ENCODE measurements at regions of chr19 and their contacts with region 1.

Region 1: DNA sequence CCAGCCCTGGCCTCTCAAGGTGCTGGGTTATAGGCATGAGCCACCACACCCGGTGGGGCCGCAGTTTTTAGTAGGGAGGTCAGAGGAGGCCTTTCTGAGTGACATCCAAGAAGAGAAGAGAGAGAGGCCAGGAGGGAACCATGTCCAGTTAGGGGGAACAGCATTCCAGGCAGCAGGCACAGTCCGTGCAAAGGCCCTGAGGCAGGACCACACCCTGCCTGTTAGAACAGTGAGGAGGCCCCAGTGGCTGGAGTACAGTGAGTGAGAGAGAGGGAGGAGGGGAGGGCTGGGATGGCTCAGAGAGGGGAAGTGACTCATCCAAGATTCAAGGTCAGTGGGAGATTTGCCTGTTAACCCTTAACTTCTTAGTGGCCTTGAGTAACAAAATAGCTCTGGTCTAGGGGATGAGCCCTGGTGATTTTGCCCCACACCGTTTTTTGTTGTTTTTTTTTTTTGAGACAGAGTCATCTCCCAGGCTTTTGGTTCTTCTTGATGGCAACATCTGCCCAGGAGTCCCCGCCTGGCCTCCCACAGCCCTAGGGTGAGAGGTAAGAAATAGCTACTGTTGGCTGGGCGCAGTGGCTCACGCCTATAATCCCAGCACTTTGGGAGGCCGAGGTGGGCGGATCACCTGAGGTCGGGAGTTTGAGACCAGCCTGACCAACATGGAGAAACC is 2.7 kb upstream of the PLIN3 start:
- DNase-seq: peak in 2 of 42 donors; percentile 25 to 55

Region 2: DNA sequence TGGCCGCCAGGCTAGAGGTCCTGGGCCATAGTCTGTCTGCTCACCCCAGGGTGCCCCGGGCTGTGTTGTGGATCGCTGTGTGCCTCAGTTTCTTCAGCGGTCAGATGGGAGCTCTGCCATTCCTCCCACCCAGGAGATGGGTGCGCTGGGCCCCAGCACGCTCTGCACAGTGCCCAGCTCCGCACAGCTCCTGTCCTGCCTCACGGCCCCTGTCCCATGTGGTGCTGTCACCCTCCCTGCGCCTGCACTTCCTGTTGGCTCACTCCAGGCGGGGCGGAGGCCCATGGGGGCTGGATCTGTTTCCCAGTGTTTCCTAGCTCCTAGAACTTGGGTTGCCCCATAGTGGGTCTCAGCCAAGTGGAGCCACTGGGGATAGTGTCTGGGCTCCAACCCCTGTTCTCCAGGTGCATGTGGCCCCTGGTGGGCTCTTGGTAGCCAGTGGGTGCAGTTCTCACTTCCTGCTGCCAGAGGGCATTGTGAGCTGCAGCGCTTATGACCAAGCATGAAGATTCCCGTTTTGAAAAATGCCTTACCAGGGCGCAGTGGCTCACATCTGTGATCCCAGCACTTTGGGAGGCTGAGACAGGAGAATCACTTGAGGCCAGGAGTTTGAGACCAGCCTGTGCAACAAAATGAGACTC is 168.6 kb after region 1 on chr19:
- intact Hi-C with region 1: loop called (anchors 5 kb)
- DNase-seq: peak in 2 of 42 donors; percentile 61 to 64

Measured in head of caudate nucleus (tissue), 42 donors.